T-cell (primary cell): ENCODE measurements at regions of chr1 and their contacts with region 1.

Region 1: GRCh38 chr1:59699227-59699847 is 115.4 kb upstream of the HOOK1 start:
- DNase-seq: peak in 16 of 35 experiments; percentile 4 to 73 (median 12)
- ATAC-seq: peak in 3 of 4 experiments; percentile 26 to 50 (median 46)
- H3K4me3 ChIP-seq: no peak overlapping the region
- H3K4me3 Mint-ChIP-seq: no peak overlapping the region
- H3K27ac ChIP-seq: no peak overlapping the region
- H3K27ac Mint-ChIP-seq: no peak overlapping the region
- H3K4me1 ChIP-seq: peaks cover 0 to 10% of the 10 kb centered on the region in 2 experiments
- H3K4me1 Mint-ChIP-seq: peaks cover 19 to 28% (median 24%) of the 10 kb centered on the region in 3 donors
- H3K27me3 ChIP-seq: no peaks in the 10 kb centered on the region
- H3K27me3 Mint-ChIP-seq: no peaks in the 10 kb centered on the region

Region 2: DNA sequence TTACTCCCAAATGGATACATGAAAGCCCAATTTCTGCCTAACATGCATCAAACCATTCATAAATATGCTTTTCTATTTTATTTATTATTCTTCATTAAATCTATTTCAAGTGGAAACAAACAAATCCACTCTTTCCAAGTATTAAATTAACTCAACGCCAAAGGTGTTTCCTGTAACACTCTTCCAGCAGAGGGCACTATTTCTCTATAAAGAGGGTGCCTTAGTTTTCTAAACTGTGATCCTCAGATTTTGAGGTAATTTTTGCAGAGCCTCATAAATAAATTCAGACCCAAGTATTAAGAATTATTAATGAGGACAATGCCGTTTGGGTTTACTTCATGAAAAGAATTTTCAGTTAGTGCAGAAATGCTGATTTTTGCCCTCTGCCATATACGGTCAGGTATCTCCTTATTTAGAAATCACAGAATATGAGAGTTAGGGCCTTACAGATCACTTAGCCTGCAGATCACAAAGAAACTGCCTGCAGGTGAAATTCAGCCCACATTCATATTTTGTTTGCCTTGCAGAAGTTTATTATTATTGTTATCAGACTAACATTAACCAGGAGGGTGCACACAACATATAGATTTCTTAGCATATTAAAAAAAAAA is 959.4 kb before region 1 on chr1:
- CTCF ChIA-PET with region 1: interaction called, 28 to 63 read pairs
- POLR2A ChIA-PET with region 1: interaction called in 1 of 2 experiments, 4 read pairs
- DNase-seq: peak in 8 of 35 experiments; percentile 7 to 79 (median 23)
- ATAC-seq: peak in 3 of 4 experiments; percentile 50 to 56 (median 55)
- H3K4me3 ChIP-seq: no peak overlapping the region
- H3K4me3 Mint-ChIP-seq: no peak overlapping the region
- H3K27ac ChIP-seq: no peak overlapping the region
- H3K27ac Mint-ChIP-seq: no peak overlapping the region
- H3K4me1 ChIP-seq: no peaks in the 10 kb centered on the region
- H3K4me1 Mint-ChIP-seq: peaks cover 4 to 8% (median 6%) of the 10 kb centered on the region in 3 donors
- H3K27me3 ChIP-seq: peaks cover 0 to 5% of the 10 kb centered on the region in 2 experiments
- H3K27me3 Mint-ChIP-seq: peaks cover 2 to 6% of the 10 kb centered on the region in 2 donors

Region 3: GRCh38 chr1:59638231-59638711 is 61.1 kb before region 1 on chr1:
- CTCF ChIA-PET with region 1: no interaction called
- POLR2A ChIA-PET with region 1: no interaction called
- DNase-seq: no peak
- ATAC-seq: no peak
- H3K4me3 ChIP-seq: no peak overlapping the region
- H3K4me3 Mint-ChIP-seq: no peak overlapping the region
- H3K27ac ChIP-seq: no peak overlapping the region
- H3K27ac Mint-ChIP-seq: no peak overlapping the region
- H3K4me1 ChIP-seq: no peaks in the 10 kb centered on the region
- H3K4me1 Mint-ChIP-seq: no peaks in the 10 kb centered on the region
- H3K27me3 ChIP-seq: no peaks in the 10 kb centered on the region
- H3K27me3 Mint-ChIP-seq: no peaks in the 10 kb centered on the region

Region 4: GRCh38 chr1:59664166-59664565 is 35.2 kb before region 1 on chr1:
- CTCF ChIA-PET with region 1: no interaction called
- POLR2A ChIA-PET with region 1: no interaction called
- DNase-seq: no peak
- ATAC-seq: no peak
- H3K4me3 ChIP-seq: no peak overlapping the region
- H3K4me3 Mint-ChIP-seq: no peak overlapping the region
- H3K27ac ChIP-seq: no peak overlapping the region
- H3K27ac Mint-ChIP-seq: no peak overlapping the region
- H3K4me1 ChIP-seq: no peaks in the 10 kb centered on the region
- H3K4me1 Mint-ChIP-seq: no peaks in the 10 kb centered on the region
- H3K27me3 ChIP-seq: no peaks in the 10 kb centered on the region
- H3K27me3 Mint-ChIP-seq: no peaks in the 10 kb centered on the region